Sigmoid colon (tissue), 7 donors: ENCODE measurements at regions of chr7 and their contacts with region 1.

Region 1: DNA sequence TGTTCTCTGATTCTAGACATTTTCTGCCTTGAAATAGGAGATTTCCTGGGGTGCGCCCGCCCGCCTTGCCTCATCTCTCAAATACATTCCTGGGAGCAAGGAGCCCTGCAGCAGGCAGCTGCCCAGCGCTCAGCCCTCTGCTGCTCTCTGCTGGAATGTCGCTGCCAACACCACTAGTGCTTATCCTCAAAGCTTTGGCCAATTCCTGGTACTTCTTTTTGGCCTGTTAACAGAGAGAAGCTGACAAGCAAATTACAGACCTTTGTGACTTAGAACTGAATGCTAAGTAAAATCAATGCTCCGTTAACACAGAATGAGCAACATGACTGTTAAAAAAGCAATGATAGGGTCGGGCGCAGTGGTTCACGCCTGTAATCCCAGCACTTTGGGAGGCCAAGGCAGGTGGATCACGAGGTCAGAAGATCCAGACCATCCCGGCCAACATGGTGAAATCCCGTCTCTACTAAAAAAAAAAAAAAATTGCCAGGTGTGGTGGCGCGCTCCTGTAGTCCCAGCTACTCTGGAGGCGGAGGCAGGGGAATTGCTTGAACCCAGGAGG is 41.9 kb upstream of the SYPL1 start:
- DNase-seq: peak; percentile 93
- H3K4me3 ChIP-seq: peak overlapping the region in 1 of 4 donors; percentile 11
- H3K27ac ChIP-seq: peak overlapping the region in 2 of 4 donors; percentile 19 to 35
- H3K4me1 ChIP-seq: peaks cover 0 to 17% (median 12%) of the 10 kb centered on the region in 4 donors
- H3K27me3 ChIP-seq: no peaks in the 10 kb centered on the region
- CTCF ChIP-seq: peak; percentile 92 to 95 (median 94)
- EP300 ChIP-seq: no peak
- POLR2A ChIP-seq: no peak

Region 2: DNA sequence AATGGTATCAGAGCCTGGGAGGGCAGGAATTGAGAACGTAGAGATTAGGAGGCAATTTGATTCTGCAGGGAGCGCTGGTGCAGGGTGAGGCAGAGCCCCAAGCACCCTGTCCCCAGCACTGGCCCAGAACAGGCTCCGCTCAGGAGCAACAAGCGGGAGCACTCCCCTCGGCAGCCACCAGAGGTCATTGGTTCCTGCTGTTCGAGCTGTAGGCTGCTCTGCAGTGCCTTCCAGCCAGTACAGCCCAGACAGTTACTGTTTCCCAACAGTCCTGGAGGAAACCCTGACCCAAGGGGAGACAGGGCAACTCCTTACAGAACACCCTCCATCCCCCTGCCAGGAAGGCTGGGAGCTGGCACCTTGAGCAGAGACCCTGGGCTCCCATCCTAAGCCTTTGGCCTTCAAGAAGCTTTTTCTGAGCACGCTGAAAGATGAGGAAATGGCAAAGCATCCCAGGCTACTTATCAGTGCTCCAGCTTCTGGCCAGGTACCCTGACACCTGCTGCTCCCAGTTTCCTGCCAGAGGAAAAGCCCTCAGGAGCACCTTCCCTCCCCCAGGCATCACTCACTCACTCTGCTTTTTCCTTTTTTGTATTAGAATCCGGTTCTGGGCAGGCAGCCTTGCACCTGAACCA is 501.5 kb before region 1 on chr7:
- intact Hi-C with region 1: loop called (anchors 10 kb)
- DNase-seq: peak; percentile 92
- H3K4me3 ChIP-seq: no peak overlapping the region
- H3K27ac ChIP-seq: no peak overlapping the region
- H3K4me1 ChIP-seq: peaks cover 0 to 48% (median 36%) of the 10 kb centered on the region in 4 donors
- H3K27me3 ChIP-seq: no peaks in the 10 kb centered on the region
- CTCF ChIP-seq: peak; percentile 76 to 91 (median 84)
- EP300 ChIP-seq: no peak
- POLR2A ChIP-seq: no peak

Region 3: DNA sequence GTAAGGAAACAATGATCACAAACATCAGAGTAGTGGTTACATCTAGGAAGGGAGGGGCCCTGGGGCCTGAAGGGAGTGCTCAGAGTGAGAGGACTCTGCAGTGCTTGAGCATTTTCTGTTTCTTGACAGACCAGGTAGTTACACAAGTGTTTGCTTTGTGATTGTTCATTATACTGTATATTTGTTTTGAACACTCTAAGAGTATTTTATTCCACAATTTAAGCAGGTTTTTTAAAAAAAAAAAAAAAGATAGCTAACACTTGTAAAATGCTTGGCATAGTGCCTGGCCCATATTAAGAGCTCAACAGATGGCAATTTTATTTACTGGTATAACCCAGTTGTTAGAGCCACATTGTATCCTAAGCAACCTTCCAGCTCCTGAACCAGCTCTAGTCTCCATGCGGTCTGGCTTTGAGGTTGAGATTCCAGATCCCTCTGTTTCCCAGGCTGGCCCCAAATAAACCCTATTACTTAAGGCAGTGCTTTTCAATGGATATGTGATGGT is 257.5 kb before region 1 on chr7:
- intact Hi-C with region 1: no loop called
- DNase-seq: no peak
- H3K4me3 ChIP-seq: no peak overlapping the region
- H3K27ac ChIP-seq: peak overlapping the region in 1 of 4 donors; percentile 53
- H3K4me1 ChIP-seq: peaks cover 0 to 21% (median 10%) of the 10 kb centered on the region in 4 donors
- H3K27me3 ChIP-seq: no peaks in the 10 kb centered on the region
- CTCF ChIP-seq: no peak
- EP300 ChIP-seq: no peak
- POLR2A ChIP-seq: no peak

Region 4: GRCh38 chr7:105975770-105976422 is 178.1 kb before region 1 on chr7:
- intact Hi-C with region 1: no loop called
- DNase-seq: no peak
- H3K4me3 ChIP-seq: no peak overlapping the region
- H3K27ac ChIP-seq: no peak overlapping the region
- H3K4me1 ChIP-seq: no peaks in the 10 kb centered on the region
- H3K27me3 ChIP-seq: no peaks in the 10 kb centered on the region
- CTCF ChIP-seq: no peak
- EP300 ChIP-seq: no peak
- POLR2A ChIP-seq: no peak

Region 5: GRCh38 chr7:106056513-106057203 is 97.3 kb before region 1 on chr7:
- intact Hi-C with region 1: loop called (anchors 1 kb)
- DNase-seq: peak; percentile 90
- H3K4me3 ChIP-seq: no peak overlapping the region
- H3K27ac ChIP-seq: peak overlapping the region in 2 of 4 donors; percentile 72 to 89
- H3K4me1 ChIP-seq: peaks cover 0 to 49% (median 36%) of the 10 kb centered on the region in 4 donors
- H3K27me3 ChIP-seq: no peaks in the 10 kb centered on the region
- CTCF ChIP-seq: peak; percentile 80 to 94 (median 86)
- EP300 ChIP-seq: no peak
- POLR2A ChIP-seq: no peak

Region 6: GRCh38 chr7:106112117-106112971 is 41.6 kb before region 1 on chr7 and contains the start of gene SYPL1:
- intact Hi-C with region 1: loop called (anchors 2 kb)
- DNase-seq: peak; percentile 98
- H3K4me3 ChIP-seq: peak within 1 kb of the TSS; percentile 62 to 81 (median 73)
- H3K27ac ChIP-seq: peak within 1 kb of the TSS; percentile 95 to 100 (median 96)
- H3K4me1 ChIP-seq: peaks cover 0 to 68% (median 50%) of the 10 kb centered on the region in 4 donors
- H3K27me3 ChIP-seq: no peaks in the 10 kb centered on the region
- CTCF ChIP-seq: no peak
- EP300 ChIP-seq: no peak
- POLR2A ChIP-seq: peak in 1 of 2 donors; percentile 38
- total RNA-seq, gene SYPL1: 99.5 to 184 (median 144) TPM

Region 7: GRCh38 chr7:106124186-106124585 is 29.8 kb before region 1 on chr7:
- intact Hi-C with region 1: no loop called
- DNase-seq: no peak
- H3K4me3 ChIP-seq: no peak overlapping the region
- H3K27ac ChIP-seq: peak overlapping the region in 3 of 4 donors; percentile 21 to 74 (median 40)
- H3K4me1 ChIP-seq: peaks cover 0 to 84% (median 60%) of the 10 kb centered on the region in 4 donors
- H3K27me3 ChIP-seq: no peaks in the 10 kb centered on the region
- CTCF ChIP-seq: no peak
- EP300 ChIP-seq: no peak
- POLR2A ChIP-seq: no peak